ENCODE measurements at regions of chr4 and their contacts with region 1.

Region 1: GRCh38 chr4:118224239-118224829 is 128.5 kb downstream of the PRSS12 start:
- DNase-seq: peak; percentile 23
- H3K4me3 ChIP-seq: no peak overlapping the region
- H3K27me3 ChIP-seq: no peaks in the 10 kb centered on the region
- CTCF ChIP-seq: peak; percentile 51

Region 2: GRCh38 chr4:117610706-117611283 is 613.5 kb before region 1 on chr4:
- CTCF ChIA-PET with region 1: no interaction called
- POLR2A ChIA-PET with region 1: no interaction called
- DNase-seq: no peak
- H3K4me3 ChIP-seq: no peak overlapping the region
- H3K27me3 ChIP-seq: no peaks in the 10 kb centered on the region
- CTCF ChIP-seq: no peak

Region 3: DNA sequence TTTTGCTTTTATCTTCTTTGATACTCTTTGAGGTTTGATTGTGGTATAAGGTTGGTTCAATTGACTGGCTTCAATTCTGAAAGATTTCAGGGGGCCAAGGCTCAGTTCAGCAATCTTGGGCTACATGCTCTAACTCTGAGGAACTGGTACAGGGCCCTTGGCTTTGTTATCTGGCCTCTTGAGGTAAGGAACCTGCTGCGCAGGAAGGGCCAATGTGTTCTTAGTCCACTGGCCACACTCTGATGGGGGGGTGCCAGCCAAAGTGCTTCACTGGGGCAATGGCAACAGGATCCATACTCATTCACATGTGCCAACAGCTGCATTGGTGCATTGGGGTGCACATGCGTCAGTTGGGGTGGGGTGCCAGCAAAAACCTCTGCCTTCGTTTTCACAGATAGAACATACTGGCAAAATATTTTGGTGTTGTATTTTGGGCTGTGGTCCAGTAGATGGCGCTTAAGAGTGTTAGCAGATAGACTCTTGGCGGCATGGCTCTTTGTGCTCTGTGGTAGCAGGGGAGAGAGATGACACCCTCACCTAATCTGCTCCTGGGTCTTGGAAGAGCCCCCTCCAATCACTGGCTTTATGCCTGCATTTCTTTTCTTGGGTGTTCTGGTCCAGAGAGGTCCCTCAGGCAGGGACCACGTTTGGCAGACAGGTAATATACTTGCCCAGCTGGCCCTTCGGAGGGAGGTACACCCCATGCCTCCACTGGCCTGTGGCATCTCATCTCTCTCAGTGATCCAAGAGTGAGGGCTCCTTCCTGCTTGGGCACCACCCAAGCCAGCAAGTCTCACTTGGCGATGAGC is 147.2 kb before region 1 on chr4:
- CTCF ChIA-PET with region 1: interaction called, 71 read pairs
- POLR2A ChIA-PET with region 1: no interaction called
- DNase-seq: no peak
- H3K4me3 ChIP-seq: no peak overlapping the region
- H3K27me3 ChIP-seq: no peaks in the 10 kb centered on the region; the same call in 1 of the 2 replicates
- CTCF ChIP-seq: peak; percentile 69

Region 4: GRCh38 chr4:118206627-118207026 is 17.7 kb before region 1 on chr4:
- CTCF ChIA-PET with region 1: interaction called, 11 read pairs
- POLR2A ChIA-PET with region 1: no interaction called
- DNase-seq: no peak
- H3K4me3 ChIP-seq: no peak overlapping the region
- H3K27me3 ChIP-seq: no peaks in the 10 kb centered on the region
- CTCF ChIP-seq: no peak

Region 5: GRCh38 chr4:118235566-118236120 is 11.3 kb after region 1 on chr4:
- CTCF ChIA-PET with region 1: interaction called, 10 read pairs
- POLR2A ChIA-PET with region 1: no interaction called
- DNase-seq: no peak
- H3K4me3 ChIP-seq: no peak overlapping the region
- H3K27me3 ChIP-seq: no peaks in the 10 kb centered on the region
- CTCF ChIP-seq: no peak

Region 6: DNA sequence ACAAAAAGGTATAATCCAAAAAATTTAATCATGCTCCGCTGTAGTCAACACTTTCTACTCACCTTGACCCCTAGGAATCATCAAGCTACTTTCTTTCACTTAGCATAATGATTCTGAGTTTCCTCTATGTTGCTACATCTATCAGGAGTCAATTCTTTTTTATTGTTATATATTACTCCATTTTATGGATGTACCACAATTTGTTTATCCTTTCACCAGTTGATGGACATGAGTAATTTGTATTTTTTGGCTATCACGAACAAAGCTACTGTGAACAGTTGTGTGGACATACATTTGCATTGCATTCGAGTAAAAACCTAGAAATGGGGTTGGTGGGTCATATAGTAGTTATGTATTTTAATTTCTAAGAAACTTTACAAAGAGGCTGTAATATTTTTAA is 25.6 kb after region 1 on chr4:
- CTCF ChIA-PET with region 1: no interaction called
- POLR2A ChIA-PET with region 1: no interaction called
- DNase-seq: no peak
- H3K4me3 ChIP-seq: no peak overlapping the region
- H3K27me3 ChIP-seq: no peaks in the 10 kb centered on the region
- CTCF ChIP-seq: no peak

Region 7: DNA sequence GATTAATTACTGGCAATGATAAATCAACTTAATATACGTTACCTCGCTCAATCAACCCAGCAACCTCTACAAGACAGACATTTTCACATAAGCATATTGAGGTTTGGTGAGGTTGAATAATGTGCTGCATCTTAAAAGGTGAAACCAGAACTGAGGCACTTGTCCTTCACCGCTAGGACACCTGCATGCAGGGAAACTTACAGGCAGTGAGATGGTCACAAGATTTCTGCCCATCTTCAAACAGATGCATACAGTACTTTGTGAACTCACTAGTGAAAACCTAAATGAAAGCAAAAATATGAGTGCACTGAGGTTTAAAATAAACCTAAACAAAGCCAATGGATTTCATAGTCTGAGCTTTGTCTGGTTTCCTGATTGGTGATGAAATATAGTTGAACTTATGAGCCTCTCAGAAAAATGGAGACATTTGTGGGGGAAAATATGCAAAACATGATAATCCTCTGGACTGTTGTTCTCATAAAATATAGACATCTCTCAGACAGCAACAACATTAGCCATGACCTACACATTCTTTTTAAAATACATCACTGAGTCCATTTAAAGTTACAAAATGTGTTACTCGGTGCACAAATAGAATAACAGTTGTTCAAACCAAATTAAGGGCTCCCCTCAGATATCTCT is 149.4 kb after region 1 on chr4:
- CTCF ChIA-PET with region 1: no interaction called
- POLR2A ChIA-PET with region 1: no interaction called
- DNase-seq: peak; percentile 76
- H3K4me3 ChIP-seq: no peak overlapping the region
- H3K27me3 ChIP-seq: no peaks in the 10 kb centered on the region
- CTCF ChIP-seq: no peak